Adrenal gland (tissue), 19 donors: ENCODE measurements at regions of chr3 and their contacts with region 1.

Region 1: GRCh38 chr3:158539414-158540014 is 31.5 kb upstream of the MLF1 start:
- DNase-seq: peak; percentile 17 to 65 (median 35)
- H3K4me3 ChIP-seq: no peak overlapping the region
- H3K27ac ChIP-seq: no peak overlapping the region
- H3K4me1 ChIP-seq: no peaks in the 10 kb centered on the region
- H3K27me3 ChIP-seq: no peaks in the 10 kb centered on the region
- CTCF ChIP-seq: peak; percentile 32 to 62 (median 44)
- POLR2A ChIP-seq: no peak

Region 2: GRCh38 chr3:157618075-157618760 is 921.3 kb before region 1 on chr3:
- intact Hi-C with region 1: loop called in 1 of 2 experiments (anchors 10 kb)
- DNase-seq: peak in 3 of 7 donors; percentile 10 to 39 (median 18)
- H3K4me3 ChIP-seq: no peak overlapping the region
- H3K27ac ChIP-seq: no peak overlapping the region
- H3K4me1 ChIP-seq: peaks cover 0 to 8% of the 10 kb centered on the region in 2 donors
- H3K27me3 ChIP-seq: peaks cover 5% of the 10 kb centered on the region
- CTCF ChIP-seq: peak; percentile 60 to 78 (median 70)
- POLR2A ChIP-seq: no peak

Region 3: DNA sequence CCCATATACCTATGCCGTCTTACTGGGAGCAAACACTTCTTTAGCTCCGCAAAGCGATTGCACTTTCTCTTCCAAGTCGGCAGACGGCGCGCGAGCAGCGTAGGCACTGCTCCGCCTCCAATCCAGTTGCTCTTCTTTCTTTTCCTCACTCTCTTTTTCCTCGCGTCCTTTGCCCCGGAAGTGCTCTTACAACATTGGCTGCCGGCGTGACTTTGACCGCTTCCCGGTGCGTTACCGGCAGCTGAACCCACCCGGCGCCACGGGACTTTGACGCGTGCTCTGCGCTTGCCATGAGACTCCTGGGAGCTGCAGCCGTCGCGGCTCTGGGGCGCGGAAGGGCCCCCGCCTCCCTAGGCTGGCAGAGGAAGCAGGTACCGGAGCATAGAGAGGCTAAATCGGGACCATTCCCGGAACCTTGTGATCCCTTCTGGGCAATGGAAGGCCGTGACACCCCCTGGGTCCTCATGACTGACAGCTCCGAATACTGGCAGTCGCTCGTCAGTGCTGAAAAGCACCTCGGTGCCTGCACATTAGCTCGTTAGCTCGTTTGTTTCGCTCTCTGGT is 104.9 kb after region 1 on chr3 and contains the start of gene GFM1:
- intact Hi-C with region 1: loop called in 1 of 2 experiments (anchors 10 kb)
- DNase-seq: peak; percentile 86 to 97 (median 94)
- H3K4me3 ChIP-seq: peak within 1 kb of the TSS; percentile 63 to 98 (median 91)
- H3K27ac ChIP-seq: peak within 1 kb of the TSS in 4 of 5 donors; percentile 83 to 94 (median 91)
- H3K4me1 ChIP-seq: peaks cover 0 to 14% of the 10 kb centered on the region in 2 donors
- H3K27me3 ChIP-seq: no peaks in the 10 kb centered on the region
- CTCF ChIP-seq: peak; percentile 70 to 86 (median 78)
- POLR2A ChIP-seq: peak; percentile 22 to 37
- total RNA-seq, gene GFM1: 31.3 to 112 (median 61.0) TPM

Region 4: DNA sequence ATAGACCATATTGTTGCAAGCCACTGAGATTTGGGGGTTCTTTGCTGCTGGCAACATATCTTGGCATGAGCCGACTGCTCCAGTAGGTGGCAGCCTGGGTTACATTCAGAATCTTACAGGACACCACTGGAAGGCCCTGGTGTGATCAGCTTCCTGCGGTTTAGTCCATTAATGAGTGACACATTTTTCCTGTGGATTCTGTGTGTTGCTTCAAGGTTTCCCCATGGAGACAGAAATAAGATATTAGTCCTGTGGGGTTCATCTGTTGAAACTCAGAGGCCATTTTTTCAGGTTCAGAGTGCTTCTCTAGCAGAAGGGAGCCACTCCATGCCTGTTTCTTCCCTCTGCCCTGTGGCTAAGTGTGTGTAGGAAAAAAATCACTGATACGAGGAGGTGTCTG is 378.5 kb after region 1 on chr3:
- intact Hi-C with region 1: no loop called
- DNase-seq: peak; percentile 28 to 81 (median 48)
- H3K4me3 ChIP-seq: no peak overlapping the region
- H3K27ac ChIP-seq: no peak overlapping the region
- H3K4me1 ChIP-seq: no peaks in the 10 kb centered on the region
- H3K27me3 ChIP-seq: no peaks in the 10 kb centered on the region
- CTCF ChIP-seq: peak; percentile 22 to 60 (median 52)
- POLR2A ChIP-seq: no peak